GM12878 (cell line): ENCODE measurements at regions of chr12 and their contacts with region 1.

Region 1: GRCh38 chr12:50151047-50151687 is 16.0 kb downstream of the CERS5 start:
- DNase-seq: no peak
- ATAC-seq: no peak
- H3K4me3 ChIP-seq: no peak overlapping the region
- H3K27ac ChIP-seq: no peak overlapping the region
- H3K4me1 ChIP-seq: no peaks in the 10 kb centered on the region
- H3K27me3 ChIP-seq: no peaks in the 10 kb centered on the region
- CTCF ChIP-seq: no peak
- EP300 ChIP-seq: no peak
- POLR2A ChIP-seq: no peak
- RAD21 ChIP-seq: no peak

Region 2: GRCh38 chr12:50167041-50167828 is 16.1 kb after region 1 on chr12 and contains the start of gene CERS5:
- CTCF ChIA-PET with region 1: interaction called, 4 read pairs
- POLR2A ChIA-PET with region 1: interaction called, 11 read pairs
- RAD21 ChIA-PET with region 1: no interaction called
- SMC1A ChIA-PET with region 1: interaction called, 3 read pairs
- in situ Hi-C with region 1: no loop called
- intact Hi-C with region 1: no loop called
- DNase-seq: peak; percentile 85
- ATAC-seq: peak; percentile 99
- H3K4me3 ChIP-seq: peak within 1 kb of the TSS; percentile 80
- H3K27ac ChIP-seq: peak within 1 kb of the TSS; percentile 71
- H3K4me1 ChIP-seq: no peaks in the 10 kb centered on the region
- H3K27me3 ChIP-seq: no peaks in the 10 kb centered on the region
- CTCF ChIP-seq: no peak
- EP300 ChIP-seq: peak in 1 of 2 experiments; percentile 22; a peak in 1 of 4 replicates
- POLR2A ChIP-seq: peak; percentile 87
- RAD21 ChIP-seq: no peak
- polyA plus RNA-seq, gene CERS5: 6.8 to 12.2 TPM